ENCODE measurements at regions of chr4 and their contacts with region 1.

Region 1: DNA sequence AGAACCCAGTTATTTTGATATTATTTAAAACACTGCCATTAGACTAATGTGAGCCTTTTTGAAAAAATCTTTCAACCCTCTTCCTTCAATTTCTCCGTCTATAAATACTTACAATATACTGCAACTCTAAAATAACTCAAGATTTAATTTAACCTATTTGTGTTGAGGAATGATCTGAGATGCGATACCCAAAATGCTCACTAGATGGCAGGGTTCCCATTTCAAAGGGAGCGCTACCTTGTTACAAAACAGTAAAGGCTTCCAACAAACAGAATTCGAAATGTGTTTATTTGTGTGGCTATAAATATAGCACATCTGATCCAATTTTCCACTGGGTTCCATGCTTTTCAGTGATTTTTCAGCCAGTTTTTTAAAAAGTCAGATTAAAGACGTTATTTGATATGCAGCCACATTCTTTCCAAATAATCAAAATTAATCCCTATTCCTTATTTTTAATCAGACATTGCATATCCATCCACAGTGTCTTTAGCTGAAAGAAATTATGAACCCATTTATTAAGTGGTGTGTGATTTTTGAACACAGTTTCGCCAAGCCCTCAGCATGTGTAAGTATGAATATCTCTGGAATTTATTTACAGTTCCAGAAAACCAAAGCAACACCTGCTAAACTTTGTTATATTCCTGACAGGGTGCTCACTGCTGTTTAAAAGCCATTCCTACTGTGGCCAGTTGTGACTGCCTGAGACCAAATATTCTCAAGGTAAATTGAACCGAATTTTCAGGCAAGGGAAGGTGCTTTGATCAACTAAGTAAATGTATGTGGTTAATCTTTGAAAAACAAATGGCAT is 668.0 kb upstream of the LCORL start:
- DNase-seq: peak; percentile 74
- H3K4me3 ChIP-seq: no peak overlapping the region
- H3K27ac ChIP-seq: no peak overlapping the region
- H3K4me1 ChIP-seq: peaks cover 0 to 26% (median 5%) of the 10 kb centered on the region in 4 donors
- H3K27me3 ChIP-seq: no peaks in the 10 kb centered on the region
- CTCF ChIP-seq: peak; percentile 67 to 86 (median 77)
- EP300 ChIP-seq: no peak
- POLR2A ChIP-seq: no peak

Region 2: GRCh38 chr4:18536428-18536827 is 153.1 kb before region 1 on chr4:
- intact Hi-C with region 1: no loop called
- DNase-seq: no peak
- H3K4me3 ChIP-seq: no peak overlapping the region
- H3K27ac ChIP-seq: no peak overlapping the region
- H3K4me1 ChIP-seq: no peaks in the 10 kb centered on the region
- H3K27me3 ChIP-seq: no peaks in the 10 kb centered on the region
- CTCF ChIP-seq: no peak
- EP300 ChIP-seq: no peak
- POLR2A ChIP-seq: no peak

Region 3: GRCh38 chr4:18934197-18934596 is 244.7 kb after region 1 on chr4:
- intact Hi-C with region 1: loop called (anchors 5 kb)
- DNase-seq: no peak
- H3K4me3 ChIP-seq: no peak overlapping the region
- H3K27ac ChIP-seq: no peak overlapping the region
- H3K4me1 ChIP-seq: peaks cover 0 to 2% (median 0%) of the 10 kb centered on the region in 4 donors
- H3K27me3 ChIP-seq: no peaks in the 10 kb centered on the region
- CTCF ChIP-seq: peak in 1 of 4 experiments; percentile 11
- EP300 ChIP-seq: no peak
- POLR2A ChIP-seq: no peak

Region 4: GRCh38 chr4:19224820-19225219 is 535.3 kb after region 1 on chr4:
- intact Hi-C with region 1: loop called (anchors 10 kb)
- DNase-seq: no peak
- H3K4me3 ChIP-seq: no peak overlapping the region
- H3K27ac ChIP-seq: no peak overlapping the region
- H3K4me1 ChIP-seq: no peaks in the 10 kb centered on the region
- H3K27me3 ChIP-seq: no peaks in the 10 kb centered on the region
- CTCF ChIP-seq: peak in 1 of 4 experiments; percentile 45
- EP300 ChIP-seq: no peak
- POLR2A ChIP-seq: no peak

Region 5: GRCh38 chr4:20237894-20238537 is 1548.5 kb after region 1 on chr4:
- intact Hi-C with region 1: loop called (anchors 10 kb)
- DNase-seq: no peak
- H3K4me3 ChIP-seq: no peak overlapping the region
- H3K27ac ChIP-seq: no peak overlapping the region
- H3K4me1 ChIP-seq: no peaks in the 10 kb centered on the region
- H3K27me3 ChIP-seq: no peaks in the 10 kb centered on the region
- CTCF ChIP-seq: no peak
- EP300 ChIP-seq: no peak
- POLR2A ChIP-seq: no peak

Region 6: GRCh38 chr4:20251796-20252655 is 1562.5 kb after region 1 on chr4 and contains the start of gene SLIT2:
- intact Hi-C with region 1: loop called (anchors 5 kb)
- DNase-seq: peak; percentile 95
- H3K4me3 ChIP-seq: peak within 1 kb of the TSS; percentile 54 to 74 (median 72)
- H3K27ac ChIP-seq: peak within 1 kb of the TSS; percentile 68 to 84 (median 79)
- H3K4me1 ChIP-seq: peaks cover 0 to 45% (median 26%) of the 10 kb centered on the region in 4 donors
- H3K27me3 ChIP-seq: peaks cover 0 to 40% (median 5%) of the 10 kb centered on the region in 3 donors
- CTCF ChIP-seq: no peak
- EP300 ChIP-seq: no peak
- POLR2A ChIP-seq: peak; percentile 60 to 67
- total RNA-seq, gene SLIT2: 27.0 to 49.0 (median 34.9) TPM

Region 7: GRCh38 chr4:20684852-20685763 is 1995.6 kb after region 1 on chr4:
- intact Hi-C with region 1: loop called (anchors 10 kb)
- DNase-seq: no peak
- H3K4me3 ChIP-seq: no peak overlapping the region
- H3K27ac ChIP-seq: no peak overlapping the region
- H3K4me1 ChIP-seq: peaks cover 0 to 15% (median 9%) of the 10 kb centered on the region in 4 donors
- H3K27me3 ChIP-seq: no peaks in the 10 kb centered on the region
- CTCF ChIP-seq: peak in 3 of 4 experiments; percentile 39 to 65 (median 42)
- EP300 ChIP-seq: no peak
- POLR2A ChIP-seq: no peak